ENCODE measurements at regions of chr14 and their contacts with region 1.

Region 1: GRCh38 chr14:45134051-45134958 is at the start of gene FKBP3:
- DNase-seq: peak; percentile 85 to 99
- ATAC-seq: peak; percentile 91 to 99 (median 93)
- H3K4me3 ChIP-seq: peak within 1 kb of the TSS; percentile 83
- H3K4me3 Mint-ChIP-seq: peak within 1 kb of the TSS; percentile 100
- H3K27ac ChIP-seq: peak within 1 kb of the TSS; percentile 87
- H3K27ac Mint-ChIP-seq: peak within 1 kb of the TSS; percentile 98 to 99
- H3K4me1 ChIP-seq: peaks cover 14% of the 10 kb centered on the region
- H3K4me1 Mint-ChIP-seq: peaks cover 38 to 46% of the 10 kb centered on the region in 2 donors
- H3K27me3 ChIP-seq: no peaks in the 10 kb centered on the region
- H3K27me3 Mint-ChIP-seq: no peaks in the 10 kb centered on the region
- CTCF ChIP-seq: no peak
- total RNA-seq, gene FKBP3: 32.2 to 39.7 (median 33.7) TPM

Region 2: DNA sequence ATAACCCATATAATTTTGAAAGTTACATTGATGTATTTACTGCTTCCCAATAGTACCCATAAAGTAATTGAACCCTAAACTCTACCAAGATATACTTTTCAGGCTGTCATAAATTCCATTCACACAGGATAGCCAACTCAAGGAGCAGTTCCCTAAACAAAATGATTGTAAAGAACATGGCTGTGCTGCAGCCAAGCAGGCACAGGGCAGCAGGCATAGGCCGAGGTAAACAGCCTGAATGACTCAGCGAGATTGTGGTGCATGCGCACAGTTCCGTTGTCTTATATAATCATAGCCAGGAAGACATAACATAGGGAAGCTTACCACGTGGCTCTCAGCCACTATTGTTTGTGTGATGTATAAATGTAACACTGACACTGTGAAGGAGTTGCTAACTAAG is 972.1 kb before region 1 on chr14:
- intact Hi-C with region 1: no loop called
- DNase-seq: no peak
- ATAC-seq: no peak
- H3K4me3 ChIP-seq: no peak overlapping the region
- H3K4me3 Mint-ChIP-seq: no peak overlapping the region
- H3K27ac ChIP-seq: no peak overlapping the region
- H3K27ac Mint-ChIP-seq: no peak overlapping the region
- H3K4me1 ChIP-seq: no peaks in the 10 kb centered on the region
- H3K4me1 Mint-ChIP-seq: no peaks in the 10 kb centered on the region
- H3K27me3 ChIP-seq: no peaks in the 10 kb centered on the region
- H3K27me3 Mint-ChIP-seq: no peaks in the 10 kb centered on the region
- CTCF ChIP-seq: no peak

Region 3: GRCh38 chr14:44897045-44897844 is 237.1 kb before region 1 on chr14:
- intact Hi-C with region 1: loop called (anchors 1 kb)
- DNase-seq: peak; percentile 84 to 99
- ATAC-seq: peak; percentile 97 to 100 (median 97)
- H3K4me3 ChIP-seq: peak overlapping the region; percentile 75
- H3K4me3 Mint-ChIP-seq: peak overlapping the region; percentile 86
- H3K27ac ChIP-seq: peak overlapping the region; percentile 92
- H3K27ac Mint-ChIP-seq: peak overlapping the region; percentile 88 to 97
- H3K4me1 ChIP-seq: peaks cover 8% of the 10 kb centered on the region
- H3K4me1 Mint-ChIP-seq: peaks cover 11 to 14% of the 10 kb centered on the region in 2 donors
- H3K27me3 ChIP-seq: no peaks in the 10 kb centered on the region
- H3K27me3 Mint-ChIP-seq: no peaks in the 10 kb centered on the region
- CTCF ChIP-seq: no peak

Region 4: DNA sequence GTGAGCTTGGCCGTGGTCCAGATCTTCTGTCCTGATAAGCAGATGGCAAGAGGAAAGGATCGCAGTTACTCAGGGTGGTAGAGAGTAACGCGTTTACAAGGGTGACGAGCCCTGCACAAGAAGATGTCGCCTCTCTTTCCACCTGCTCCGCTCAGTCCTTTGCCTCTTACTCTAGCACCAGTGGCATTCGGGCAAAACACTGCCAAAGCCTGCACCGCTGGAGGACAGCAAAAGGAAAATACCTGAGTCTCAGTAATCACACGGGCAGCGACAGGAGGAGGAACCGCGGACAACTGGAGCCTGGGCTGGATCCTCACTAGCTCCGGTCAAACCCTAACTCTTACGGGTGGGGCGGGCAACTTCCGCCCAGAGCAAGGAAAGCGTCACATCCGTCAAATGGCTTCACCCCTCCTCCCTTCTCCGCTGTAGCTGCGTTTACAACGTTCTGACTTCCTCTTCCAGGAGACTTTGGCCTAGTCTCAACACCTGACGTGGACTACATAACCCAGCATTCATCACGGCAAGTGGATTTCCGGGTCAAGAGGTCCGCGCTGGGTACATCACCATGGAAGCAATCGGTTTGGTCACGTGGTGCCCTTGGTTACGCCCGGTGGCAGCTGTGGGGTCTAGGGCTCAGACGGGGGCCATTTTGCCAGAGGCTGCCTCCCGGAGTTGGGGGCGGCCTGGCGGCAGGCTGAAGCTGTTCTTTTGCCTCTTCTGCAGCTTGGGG is 172.5 kb before region 1 on chr14 and contains the starts of genes KLHL28 and TOGARAM1:
- intact Hi-C with region 1: loop called (anchors 1 kb)
- DNase-seq: peak; percentile 93 to 99
- ATAC-seq: peak; percentile 89 to 98 (median 93)
- H3K4me3 ChIP-seq: peak within 1 kb of the TSS; percentile 97
- H3K4me3 Mint-ChIP-seq: no peak within 1 kb of the TSS
- H3K27ac ChIP-seq: peak within 1 kb of the TSS; percentile 93
- H3K27ac Mint-ChIP-seq: no peak within 1 kb of the TSS
- H3K4me1 ChIP-seq: peaks cover 23% of the 10 kb centered on the region
- H3K4me1 Mint-ChIP-seq: peaks cover 41 to 43% of the 10 kb centered on the region in 2 donors
- H3K27me3 ChIP-seq: no peaks in the 10 kb centered on the region
- H3K27me3 Mint-ChIP-seq: no peaks in the 10 kb centered on the region
- CTCF ChIP-seq: no peak
- total RNA-seq, gene KLHL28: 47.6 to 59.7 (median 56.0) TPM
- total RNA-seq, gene TOGARAM1: 17.4 to 21.4 (median 19.6) TPM

Region 5: DNA sequence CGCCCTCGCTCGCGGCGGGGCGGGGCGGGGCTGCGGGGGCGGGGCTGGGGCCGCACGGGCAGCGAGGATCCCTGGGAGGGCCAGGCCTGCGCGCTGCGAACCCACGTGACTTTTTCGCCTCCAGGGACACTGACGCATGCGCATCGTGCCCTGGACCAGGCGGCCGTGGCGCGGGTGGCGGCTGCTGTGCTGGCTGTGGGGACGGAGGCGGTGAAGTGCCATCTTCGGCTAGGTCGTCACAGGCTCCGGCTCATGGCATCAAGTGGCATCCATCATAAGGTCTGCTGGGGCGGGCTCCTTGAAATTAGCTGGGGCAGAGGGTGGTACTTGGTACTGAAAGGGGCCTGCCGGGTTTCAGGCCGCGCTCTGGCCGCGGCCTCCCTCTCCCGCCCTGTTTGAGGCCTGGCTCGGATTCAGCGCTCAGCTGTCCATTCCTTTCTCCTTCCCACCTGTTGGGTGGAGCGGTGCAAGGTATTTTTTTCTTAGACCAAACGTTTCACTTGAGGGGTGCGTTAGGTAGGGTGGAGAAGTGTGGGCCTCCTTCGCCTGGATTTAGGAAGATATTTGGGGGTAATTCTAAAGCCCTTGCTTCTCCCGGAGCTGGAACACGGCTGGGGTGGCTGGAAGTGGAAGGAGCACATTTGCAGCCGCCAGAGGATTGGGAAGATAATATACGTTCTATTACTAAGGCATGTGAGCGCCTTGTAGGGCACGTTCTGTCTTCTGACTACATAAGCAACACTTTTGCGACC is 50.2 kb before region 1 on chr14 and contains the start of gene PRPF39:
- intact Hi-C with region 1: loop called (anchors 1 kb)
- DNase-seq: peak; percentile 94 to 99
- ATAC-seq: peak; percentile 92 to 98 (median 95)
- H3K4me3 ChIP-seq: peak within 1 kb of the TSS; percentile 82
- H3K4me3 Mint-ChIP-seq: peak within 1 kb of the TSS; percentile 95
- H3K27ac ChIP-seq: peak within 1 kb of the TSS; percentile 69
- H3K27ac Mint-ChIP-seq: peak within 1 kb of the TSS; percentile 89 to 96
- H3K4me1 ChIP-seq: peaks cover 12% of the 10 kb centered on the region
- H3K4me1 Mint-ChIP-seq: peaks cover 43 to 47% of the 10 kb centered on the region in 2 donors
- H3K27me3 ChIP-seq: no peaks in the 10 kb centered on the region
- H3K27me3 Mint-ChIP-seq: no peaks in the 10 kb centered on the region
- CTCF ChIP-seq: no peak
- total RNA-seq, gene PRPF39: 49.2 to 61.2 (median 52.5) TPM

Region 6: DNA sequence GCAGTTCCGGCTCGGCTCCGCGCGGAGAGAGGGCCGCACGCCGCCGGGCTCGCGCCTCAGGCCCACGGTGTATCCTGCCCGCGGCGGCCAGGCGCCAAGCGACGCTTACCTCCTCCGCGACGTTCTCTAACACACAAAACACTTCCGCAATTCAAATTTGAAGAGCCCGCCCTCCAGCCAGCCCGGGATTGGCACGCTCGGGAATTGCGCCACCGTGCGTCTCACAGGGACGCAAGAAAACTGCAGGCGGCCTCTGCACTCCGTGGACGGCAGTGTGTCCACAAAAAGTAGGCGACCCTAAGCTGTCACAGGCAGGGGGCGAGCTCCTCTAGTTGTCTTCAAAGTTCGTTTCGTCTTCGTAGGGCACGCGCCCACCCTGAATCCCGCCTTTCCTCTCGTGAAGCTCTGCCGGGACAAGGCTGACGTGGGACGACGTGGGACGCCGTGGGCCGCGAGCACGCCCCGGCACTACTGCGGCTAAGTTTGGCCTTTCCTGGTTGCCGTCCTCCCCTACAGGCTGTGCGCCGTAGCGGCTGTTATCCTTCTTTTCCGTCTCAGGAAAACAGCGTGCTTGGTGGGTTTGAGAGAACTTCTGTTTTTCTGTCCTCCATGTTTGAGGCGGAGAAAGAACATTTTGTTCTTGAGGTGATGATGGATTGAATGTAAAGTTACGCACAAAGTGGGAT is 118.9 kb after region 1 on chr14 and contains the start of gene MIS18BP1:
- intact Hi-C with region 1: loop called (anchors 1 kb)
- DNase-seq: peak; percentile 87 to 97
- ATAC-seq: peak; percentile 88 to 95 (median 90)
- H3K4me3 ChIP-seq: peak within 1 kb of the TSS; percentile 92
- H3K4me3 Mint-ChIP-seq: peak within 1 kb of the TSS; percentile 93
- H3K27ac ChIP-seq: peak within 1 kb of the TSS; percentile 91
- H3K27ac Mint-ChIP-seq: peak within 1 kb of the TSS; percentile 92 to 94
- H3K4me1 ChIP-seq: peaks cover 27% of the 10 kb centered on the region
- H3K4me1 Mint-ChIP-seq: peaks cover 18 to 20% of the 10 kb centered on the region in 2 donors
- H3K27me3 ChIP-seq: no peaks in the 10 kb centered on the region
- H3K27me3 Mint-ChIP-seq: no peaks in the 10 kb centered on the region
- CTCF ChIP-seq: peak; percentile 86
- total RNA-seq, gene MIS18BP1: 60.3 to 70.2 (median 66.3) TPM

Region 7: GRCh38 chr14:45267071-45267470 is 132.8 kb after region 1 on chr14:
- intact Hi-C with region 1: loop called (anchors 2 kb)
- DNase-seq: no peak
- ATAC-seq: no peak
- H3K4me3 ChIP-seq: no peak overlapping the region
- H3K4me3 Mint-ChIP-seq: no peak overlapping the region
- H3K27ac ChIP-seq: no peak overlapping the region
- H3K27ac Mint-ChIP-seq: no peak overlapping the region
- H3K4me1 ChIP-seq: no peaks in the 10 kb centered on the region
- H3K4me1 Mint-ChIP-seq: no peaks in the 10 kb centered on the region
- H3K27me3 ChIP-seq: peaks cover 2% of the 10 kb centered on the region
- H3K27me3 Mint-ChIP-seq: peaks cover 8% of the 10 kb centered on the region in 2 donors
- CTCF ChIP-seq: no peak

Region 8: DNA sequence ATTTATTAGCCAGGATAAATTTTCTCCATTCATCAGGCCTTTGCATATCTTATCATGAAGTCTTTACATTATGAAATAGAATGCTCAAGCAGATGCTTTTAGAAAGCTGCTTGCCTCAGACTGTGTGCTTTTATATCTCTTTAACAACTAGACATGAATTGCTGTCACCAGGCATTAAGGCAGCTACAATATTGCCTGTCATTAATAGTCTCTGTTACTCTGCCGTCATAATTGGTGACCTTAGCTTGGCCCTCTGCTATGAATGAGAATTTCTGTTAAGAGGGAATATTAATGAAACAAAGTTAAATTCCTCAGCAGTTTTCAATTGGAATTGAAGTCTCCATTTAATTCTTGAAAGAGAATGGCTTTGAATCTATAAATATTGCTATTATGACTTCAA is 385.5 kb after region 1 on chr14:
- intact Hi-C with region 1: no loop called
- DNase-seq: no peak
- ATAC-seq: no peak
- H3K4me3 ChIP-seq: no peak overlapping the region
- H3K4me3 Mint-ChIP-seq: no peak overlapping the region
- H3K27ac ChIP-seq: no peak overlapping the region
- H3K27ac Mint-ChIP-seq: no peak overlapping the region
- H3K4me1 ChIP-seq: no peaks in the 10 kb centered on the region
- H3K4me1 Mint-ChIP-seq: no peaks in the 10 kb centered on the region
- H3K27me3 ChIP-seq: no peaks in the 10 kb centered on the region
- H3K27me3 Mint-ChIP-seq: no peaks in the 10 kb centered on the region
- CTCF ChIP-seq: no peak

Measured in natural killer cell (primary cell).